Caco-2 (cell line): ENCODE measurements at regions of chr3 and their contacts with region 1.

Region 1: DNA sequence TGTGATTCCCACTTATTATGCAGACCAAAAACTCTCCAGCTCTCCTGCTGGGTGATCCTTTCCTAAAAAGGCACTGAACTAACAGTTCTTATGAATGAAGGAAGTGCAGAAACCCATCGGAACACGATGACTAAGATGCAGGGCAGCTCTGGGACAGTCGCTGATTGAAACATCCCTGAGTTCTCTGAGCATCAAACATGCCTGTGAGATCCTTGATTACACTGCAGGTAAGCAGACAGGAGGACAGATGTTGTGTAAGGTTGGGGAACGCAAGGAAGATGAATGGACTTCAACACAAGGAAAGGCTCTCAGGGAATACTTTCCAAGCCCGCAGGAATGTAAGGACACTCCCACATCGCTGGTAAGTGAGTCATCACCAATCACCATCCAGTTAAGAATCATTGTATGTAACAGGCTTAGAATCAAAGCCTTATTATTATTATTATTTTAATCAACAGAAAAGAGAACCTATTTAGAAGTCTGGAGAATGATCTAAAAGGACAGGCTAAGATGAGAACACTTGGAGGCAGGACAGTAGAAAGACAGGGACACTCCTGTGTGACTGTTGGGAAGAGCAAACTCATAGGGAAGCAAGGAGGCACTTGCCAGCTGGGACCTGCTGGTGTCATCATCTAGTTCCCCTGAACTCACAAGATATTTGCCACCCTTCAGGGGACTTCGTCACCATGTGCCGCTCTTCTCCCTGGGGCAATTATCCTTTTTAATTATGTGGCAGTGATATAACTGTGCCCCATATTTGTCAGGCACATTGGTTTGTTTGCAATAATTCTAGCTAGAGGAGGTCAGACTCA is 26.0 kb downstream of the TMEM158 start:
- DNase-seq: peak; percentile 68 to 80
- H3K4me3 ChIP-seq: no peak overlapping the region
- H3K4me3 Mint-ChIP-seq: peak overlapping the region; percentile 44
- H3K27ac Mint-ChIP-seq: peak overlapping the region; percentile 92
- H3K4me1 ChIP-seq: peaks cover 25% of the 10 kb centered on the region
- H3K4me1 Mint-ChIP-seq: peaks cover 14% of the 10 kb centered on the region
- H3K27me3 ChIP-seq: no peaks in the 10 kb centered on the region
- H3K27me3 Mint-ChIP-seq: no peaks in the 10 kb centered on the region
- CTCF ChIP-seq: no peak

Region 2: DNA sequence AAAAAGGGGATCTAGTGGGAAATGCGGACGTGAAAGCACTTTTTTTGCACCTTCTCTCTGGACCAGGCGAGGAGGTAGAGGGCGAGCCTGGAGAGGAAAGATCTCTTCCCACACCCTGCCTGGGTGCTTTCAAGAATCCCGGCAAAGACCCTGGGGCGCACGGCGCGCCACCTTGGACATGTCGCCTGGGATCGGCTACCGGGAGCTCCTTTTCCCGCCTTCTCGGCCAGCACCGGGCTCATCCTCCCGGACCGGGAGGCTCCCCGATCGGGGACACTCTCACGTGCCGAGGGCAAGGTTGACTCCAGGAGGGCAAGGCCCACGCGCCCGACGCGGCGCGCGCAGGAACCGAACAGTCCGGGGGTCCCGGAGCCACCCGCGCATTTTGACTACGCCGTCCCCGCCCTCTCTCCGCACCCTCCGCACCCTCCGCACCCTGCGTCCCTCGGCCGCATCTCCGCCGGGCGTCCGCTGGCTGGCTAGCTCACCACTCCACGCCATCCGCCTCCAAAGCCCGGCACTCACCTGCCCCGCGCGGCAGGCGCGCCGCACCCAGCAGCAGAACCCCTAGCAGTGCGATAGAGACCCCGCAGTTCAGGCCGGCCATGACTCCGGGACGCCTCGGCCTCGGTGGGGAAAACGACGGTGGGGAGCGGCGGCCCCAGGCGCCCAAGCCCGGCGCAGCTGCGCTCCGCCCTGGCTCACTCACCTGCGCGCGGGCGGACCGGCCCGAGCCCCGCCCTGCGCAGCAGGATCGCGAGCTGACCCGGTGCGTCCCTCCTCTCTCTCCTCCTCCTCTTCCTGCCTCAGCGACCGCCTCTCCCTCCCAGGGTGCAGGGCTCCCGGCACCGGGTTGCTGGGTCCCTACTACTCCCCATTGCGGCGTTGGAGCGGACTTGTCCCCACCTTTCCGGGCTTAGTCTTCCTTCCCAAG is 54.1 kb before region 1 on chr3 and contains the start of gene CDCP1:
- CTCF ChIA-PET with region 1: no interaction called
- POLR2A ChIA-PET with region 1: no interaction called
- intact Hi-C with region 1: loop called (anchors 10 kb)
- DNase-seq: peak; percentile 65
- H3K4me3 ChIP-seq: peak within 1 kb of the TSS; percentile 93
- H3K4me3 Mint-ChIP-seq: peak within 1 kb of the TSS; percentile 98
- H3K27ac Mint-ChIP-seq: peak within 1 kb of the TSS; percentile 89
- H3K4me1 ChIP-seq: peaks cover 11% of the 10 kb centered on the region; the same call in 1 of the 2 replicates
- H3K4me1 Mint-ChIP-seq: peaks cover 6% of the 10 kb centered on the region
- H3K27me3 ChIP-seq: no peaks in the 10 kb centered on the region
- H3K27me3 Mint-ChIP-seq: no peaks in the 10 kb centered on the region
- CTCF ChIP-seq: no peak
- total RNA-seq, gene CDCP1: 22.5 and 25.0 TPM in 2 replicates

Region 3: GRCh38 chr3:45167011-45167911 is 32.8 kb before region 1 on chr3:
- CTCF ChIA-PET with region 1: no interaction called
- POLR2A ChIA-PET with region 1: no interaction called
- intact Hi-C with region 1: loop called (anchors 5 kb)
- DNase-seq: peak; percentile 85 to 88
- H3K4me3 ChIP-seq: 0 out of 2 replicates have a peak overlapping the region, but pooled peaks have one; percentile 4
- H3K4me3 Mint-ChIP-seq: peak overlapping the region; percentile 58
- H3K27ac Mint-ChIP-seq: peak overlapping the region; percentile 86
- H3K4me1 ChIP-seq: no peaks in the 10 kb centered on the region; the same call in 1 of the 2 replicates
- H3K4me1 Mint-ChIP-seq: peaks cover 11% of the 10 kb centered on the region
- H3K27me3 ChIP-seq: no peaks in the 10 kb centered on the region
- H3K27me3 Mint-ChIP-seq: no peaks in the 10 kb centered on the region
- CTCF ChIP-seq: no peak

Region 4: GRCh38 chr3:45182915-45183867 is 16.9 kb before region 1 on chr3:
- CTCF ChIA-PET with region 1: no interaction called
- POLR2A ChIA-PET with region 1: no interaction called
- intact Hi-C with region 1: loop called (anchors 1 kb)
- DNase-seq: peak; percentile 62 to 67
- H3K4me3 ChIP-seq: no peak overlapping the region
- H3K4me3 Mint-ChIP-seq: no peak overlapping the region
- H3K27ac Mint-ChIP-seq: peak overlapping the region; percentile 37
- H3K4me1 ChIP-seq: peaks cover 12% of the 10 kb centered on the region
- H3K4me1 Mint-ChIP-seq: peaks cover 16% of the 10 kb centered on the region
- H3K27me3 ChIP-seq: no peaks in the 10 kb centered on the region
- H3K27me3 Mint-ChIP-seq: no peaks in the 10 kb centered on the region
- CTCF ChIP-seq: no peak

Region 5: GRCh38 chr3:45938864-45939263 is 738.8 kb after region 1 on chr3:
- CTCF ChIA-PET with region 1: no interaction called
- POLR2A ChIA-PET with region 1: no interaction called
- intact Hi-C with region 1: no loop called
- DNase-seq: peak; percentile 78
- H3K4me3 ChIP-seq: no peak overlapping the region
- H3K4me3 Mint-ChIP-seq: no peak overlapping the region
- H3K27ac Mint-ChIP-seq: no peak overlapping the region
- H3K4me1 ChIP-seq: no peaks in the 10 kb centered on the region
- H3K4me1 Mint-ChIP-seq: peaks cover 14% of the 10 kb centered on the region
- H3K27me3 ChIP-seq: no peaks in the 10 kb centered on the region
- H3K27me3 Mint-ChIP-seq: no peaks in the 10 kb centered on the region
- CTCF ChIP-seq: peak; percentile 71 to 88